CD8-positive, alpha-beta memory T cell (primary cell): ENCODE measurements at regions of chr9 and their contacts with region 1.

Region 1: GRCh38 chr9:114738581-114739316 is 56.8 kb upstream of the TEX48 start:
- DNase-seq: peak; percentile 44 to 78 (median 64)
- H3K4me3 ChIP-seq: no peak overlapping the region
- H3K4me3 Mint-ChIP-seq: peak overlapping the region in 5 of 7 donors; percentile 9 to 66 (median 45)
- H3K27ac ChIP-seq: no peak overlapping the region
- H3K27ac Mint-ChIP-seq: peak overlapping the region; percentile 82 to 92 (median 88)
- H3K4me1 ChIP-seq: peaks cover 31% of the 10 kb centered on the region
- H3K4me1 Mint-ChIP-seq: peaks cover 45 to 46% (median 45%) of the 10 kb centered on the region in 3 donors
- H3K27me3 ChIP-seq: no peaks in the 10 kb centered on the region
- H3K27me3 Mint-ChIP-seq: no peaks in the 10 kb centered on the region

Region 2: GRCh38 chr9:113906411-113907110 is 832.2 kb before region 1 on chr9:
- CTCF ChIA-PET with region 1: no interaction called
- POLR2A ChIA-PET with region 1: no interaction called
- DNase-seq: no peak
- H3K4me3 ChIP-seq: no peak overlapping the region
- H3K4me3 Mint-ChIP-seq: no peak overlapping the region
- H3K27ac ChIP-seq: no peak overlapping the region
- H3K27ac Mint-ChIP-seq: no peak overlapping the region
- H3K4me1 ChIP-seq: no peaks in the 10 kb centered on the region
- H3K4me1 Mint-ChIP-seq: no peaks in the 10 kb centered on the region
- H3K27me3 ChIP-seq: no peaks in the 10 kb centered on the region
- H3K27me3 Mint-ChIP-seq: peaks cover 12 to 30% of the 10 kb centered on the region in 2 donors

Region 3: GRCh38 chr9:114706711-114707110 is 32.0 kb before region 1 on chr9:
- CTCF ChIA-PET with region 1: interaction called, 11 read pairs
- POLR2A ChIA-PET with region 1: no interaction called
- DNase-seq: no peak
- H3K4me3 ChIP-seq: no peak overlapping the region
- H3K4me3 Mint-ChIP-seq: no peak overlapping the region
- H3K27ac ChIP-seq: no peak overlapping the region
- H3K27ac Mint-ChIP-seq: no peak overlapping the region
- H3K4me1 ChIP-seq: peaks cover 4% of the 10 kb centered on the region
- H3K4me1 Mint-ChIP-seq: peaks cover 6 to 22% (median 21%) of the 10 kb centered on the region in 3 donors
- H3K27me3 ChIP-seq: no peaks in the 10 kb centered on the region
- H3K27me3 Mint-ChIP-seq: peaks cover 0 to 2% of the 10 kb centered on the region in 2 donors

Region 4: GRCh38 chr9:114786251-114786650 is 47.5 kb after region 1 on chr9:
- CTCF ChIA-PET with region 1: no interaction called
- POLR2A ChIA-PET with region 1: no interaction called
- DNase-seq: no peak
- H3K4me3 ChIP-seq: no peak overlapping the region
- H3K4me3 Mint-ChIP-seq: no peak overlapping the region
- H3K27ac ChIP-seq: no peak overlapping the region
- H3K27ac Mint-ChIP-seq: no peak overlapping the region
- H3K4me1 ChIP-seq: no peaks in the 10 kb centered on the region
- H3K4me1 Mint-ChIP-seq: peaks cover 0 to 2% (median 0%) of the 10 kb centered on the region in 3 donors
- H3K27me3 ChIP-seq: no peaks in the 10 kb centered on the region
- H3K27me3 Mint-ChIP-seq: peaks cover 0 to 3% of the 10 kb centered on the region in 2 donors

Region 5: DNA sequence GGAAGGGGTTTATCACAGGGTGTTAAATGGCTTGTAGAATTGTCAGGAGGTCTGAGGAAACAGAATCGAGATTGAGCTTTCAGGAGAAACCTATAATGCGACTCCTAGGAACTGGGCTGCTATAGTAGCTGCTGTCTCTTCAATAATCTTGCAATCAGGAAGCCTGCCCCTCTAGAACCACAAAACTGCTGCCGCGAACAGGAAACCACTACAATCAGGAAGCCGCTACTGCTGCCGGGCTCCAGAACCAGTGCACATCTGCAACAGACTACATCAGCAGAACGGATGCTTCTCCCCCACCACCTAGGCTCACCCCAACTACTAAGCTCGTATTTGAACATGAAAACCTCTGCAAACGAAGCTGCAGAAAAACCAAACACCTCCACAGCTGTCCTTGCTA is 160.0 kb after region 1 on chr9:
- CTCF ChIA-PET with region 1: interaction called, 12 read pairs
- POLR2A ChIA-PET with region 1: interaction called, 3 read pairs
- DNase-seq: peak; percentile 54 to 89 (median 88)
- H3K4me3 ChIP-seq: peak overlapping the region; percentile 30
- H3K4me3 Mint-ChIP-seq: no peak overlapping the region
- H3K27ac ChIP-seq: no peak overlapping the region
- H3K27ac Mint-ChIP-seq: no peak overlapping the region
- H3K4me1 ChIP-seq: peaks cover 99% of the 10 kb centered on the region
- H3K4me1 Mint-ChIP-seq: peaks cover 0 to 25% (median 0%) of the 10 kb centered on the region in 3 donors
- H3K27me3 ChIP-seq: no peaks in the 10 kb centered on the region
- H3K27me3 Mint-ChIP-seq: no peaks in the 10 kb centered on the region

Region 6: GRCh38 chr9:114906908-114907571 is 168.3 kb after region 1 on chr9:
- CTCF ChIA-PET with region 1: interaction called, 85 read pairs
- POLR2A ChIA-PET with region 1: interaction called, 4 read pairs
- DNase-seq: peak in 4 of 5 donors; percentile 6 to 55 (median 28)
- H3K4me3 ChIP-seq: peak overlapping the region; percentile 9
- H3K4me3 Mint-ChIP-seq: peak overlapping the region in 6 of 7 donors; percentile 23 to 83 (median 74)
- H3K27ac ChIP-seq: no peak overlapping the region
- H3K27ac Mint-ChIP-seq: peak overlapping the region; percentile 80 to 96 (median 92)
- H3K4me1 ChIP-seq: peaks cover 91% of the 10 kb centered on the region
- H3K4me1 Mint-ChIP-seq: peaks cover 0 to 58% (median 53%) of the 10 kb centered on the region in 3 donors
- H3K27me3 ChIP-seq: no peaks in the 10 kb centered on the region
- H3K27me3 Mint-ChIP-seq: no peaks in the 10 kb centered on the region

Region 7: GRCh38 chr9:114930056-114930812 is 191.5 kb after region 1 on chr9 and contains the start of gene TNFSF8:
- CTCF ChIA-PET with region 1: interaction called, 25 read pairs
- POLR2A ChIA-PET with region 1: interaction called, 5 read pairs
- DNase-seq: peak; percentile 54 to 91 (median 79)
- H3K4me3 ChIP-seq: peak within 1 kb of the TSS; percentile 89
- H3K4me3 Mint-ChIP-seq: peak within 1 kb of the TSS; percentile 89 to 98 (median 97)
- H3K27ac ChIP-seq: peak within 1 kb of the TSS; percentile 60
- H3K27ac Mint-ChIP-seq: peak within 1 kb of the TSS; percentile 86 to 99 (median 98)
- H3K4me1 ChIP-seq: peaks cover 36% of the 10 kb centered on the region
- H3K4me1 Mint-ChIP-seq: peaks cover 38 to 56% (median 51%) of the 10 kb centered on the region in 3 donors
- H3K27me3 ChIP-seq: no peaks in the 10 kb centered on the region
- H3K27me3 Mint-ChIP-seq: peaks cover 0 to 3% of the 10 kb centered on the region in 2 donors
- total RNA-seq, gene TNFSF8: 72.6 to 73.2 TPM

Region 8: GRCh38 chr9:114941376-114941775 is 202.6 kb after region 1 on chr9:
- CTCF ChIA-PET with region 1: interaction called, 3 read pairs
- POLR2A ChIA-PET with region 1: interaction called, 10 read pairs
- DNase-seq: no peak
- H3K4me3 ChIP-seq: no peak overlapping the region
- H3K4me3 Mint-ChIP-seq: no peak overlapping the region
- H3K27ac ChIP-seq: no peak overlapping the region
- H3K27ac Mint-ChIP-seq: peak overlapping the region in 1 of 8 donors; percentile 15
- H3K4me1 ChIP-seq: peaks cover 17% of the 10 kb centered on the region
- H3K4me1 Mint-ChIP-seq: peaks cover 16 to 24% (median 22%) of the 10 kb centered on the region in 3 donors
- H3K27me3 ChIP-seq: no peaks in the 10 kb centered on the region
- H3K27me3 Mint-ChIP-seq: no peaks in the 10 kb centered on the region

Region 9: DNA sequence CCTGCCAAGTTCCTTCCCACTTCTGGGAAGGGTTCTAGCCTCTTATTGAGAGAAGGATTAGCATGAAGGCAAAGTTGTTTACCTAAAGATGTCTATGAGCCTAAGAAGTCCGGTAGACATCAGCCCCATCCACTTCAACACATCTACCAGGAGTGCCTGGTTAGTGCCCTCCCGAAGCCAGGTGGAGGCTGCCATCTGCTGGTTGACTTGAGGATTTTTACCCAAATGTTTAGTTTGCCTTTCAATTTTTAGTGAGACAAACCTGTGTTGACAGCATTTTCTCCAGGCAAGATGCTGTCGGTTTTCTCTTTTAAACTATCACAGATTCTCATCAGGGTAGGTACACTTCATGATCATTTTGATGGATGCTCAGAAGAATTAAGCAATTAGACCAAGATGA is 275.2 kb after region 1 on chr9:
- CTCF ChIA-PET with region 1: interaction called, 40 read pairs
- POLR2A ChIA-PET with region 1: no interaction called
- DNase-seq: peak; percentile 58 to 85 (median 71)
- H3K4me3 ChIP-seq: no peak overlapping the region
- H3K4me3 Mint-ChIP-seq: no peak overlapping the region
- H3K27ac ChIP-seq: no peak overlapping the region
- H3K27ac Mint-ChIP-seq: peak overlapping the region in 1 of 8 donors; percentile 13
- H3K4me1 ChIP-seq: no peaks in the 10 kb centered on the region
- H3K4me1 Mint-ChIP-seq: peaks cover 1 to 23% (median 8%) of the 10 kb centered on the region in 3 donors
- H3K27me3 ChIP-seq: no peaks in the 10 kb centered on the region
- H3K27me3 Mint-ChIP-seq: peaks cover 0 to 8% of the 10 kb centered on the region in 2 donors